ENCODE measurements at regions of chr12 and their contacts with region 1.

Region 1: DNA sequence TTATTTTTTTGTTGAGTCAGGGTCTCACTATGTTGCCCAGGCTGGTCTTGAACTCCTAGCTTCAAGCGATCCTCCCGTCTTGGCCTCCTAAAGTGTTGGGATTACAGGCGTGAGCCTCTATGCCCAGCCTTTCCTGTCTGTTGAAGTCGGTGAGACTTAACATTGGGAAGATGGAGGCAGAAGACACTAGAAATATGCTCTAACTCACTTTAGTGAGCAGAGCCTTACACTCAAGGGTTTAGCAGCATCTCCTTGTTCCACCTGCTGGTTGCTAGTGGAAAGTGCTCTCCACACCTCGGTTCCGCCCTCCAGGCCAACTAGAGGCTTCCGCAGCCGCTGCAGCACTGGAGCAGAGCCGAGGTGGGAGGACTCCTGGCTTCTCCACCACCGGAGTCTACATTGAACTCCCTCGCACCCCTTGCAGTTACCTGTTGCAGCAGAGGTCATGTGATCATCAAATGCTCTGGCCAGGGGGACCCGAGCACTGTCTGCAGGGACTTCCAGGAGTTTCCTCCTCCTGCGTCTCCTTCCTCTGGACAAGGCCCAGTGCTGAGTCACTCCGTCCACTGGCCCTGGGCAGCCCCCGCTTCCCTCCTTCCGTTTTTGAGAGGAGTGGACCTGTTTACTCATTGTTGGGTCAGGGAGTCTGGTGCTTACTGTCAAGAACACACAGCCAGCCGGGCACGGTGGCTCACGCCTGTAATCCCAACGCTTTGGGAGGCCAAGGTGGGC is 9.4 kb upstream of the HVCN1 start:
- DNase-seq: peak; percentile 51 to 87 (median 77)
- ATAC-seq: peak; percentile 96
- H3K4me3 ChIP-seq: no peak overlapping the region
- H3K4me3 Mint-ChIP-seq: peak overlapping the region in 4 of 10 donors; percentile 14 to 69 (median 34)
- H3K27ac ChIP-seq: no peak overlapping the region
- H3K27ac Mint-ChIP-seq: peak overlapping the region in 6 of 9 donors; percentile 49 to 88 (median 74)
- H3K4me1 ChIP-seq: peaks cover 7 to 10% of the 10 kb centered on the region in 2 donors
- H3K4me1 Mint-ChIP-seq: peaks cover 5 to 25% (median 18%) of the 10 kb centered on the region in 7 donors
- H3K27me3 ChIP-seq: no peaks in the 10 kb centered on the region
- H3K27me3 Mint-ChIP-seq: no peaks in the 10 kb centered on the region

Region 2: GRCh38 chr12:110280392-110280778 is 418.0 kb before region 1 on chr12:
- CTCF ChIA-PET with region 1: no interaction called
- POLR2A ChIA-PET with region 1: no interaction called
- intact Hi-C with region 1: no loop called
- DNase-seq: peak in 3 of 9 donors; percentile 41 to 62 (median 52)
- ATAC-seq: peak; percentile 20
- H3K4me3 ChIP-seq: peak overlapping the region; percentile 83
- H3K4me3 Mint-ChIP-seq: peak overlapping the region; percentile 82 to 96 (median 90)
- H3K27ac ChIP-seq: peak overlapping the region; percentile 87
- H3K27ac Mint-ChIP-seq: peak overlapping the region; percentile 4 to 93 (median 88)
- H3K4me1 ChIP-seq: peaks cover 12 to 27% of the 10 kb centered on the region in 2 donors
- H3K4me1 Mint-ChIP-seq: peaks cover 37 to 46% (median 44%) of the 10 kb centered on the region in 7 donors
- H3K27me3 ChIP-seq: no peaks in the 10 kb centered on the region
- H3K27me3 Mint-ChIP-seq: peaks cover 0 to 11% (median 0%) of the 10 kb centered on the region in 5 donors

Region 3: GRCh38 chr12:110555577-110556406 is 142.5 kb before region 1 on chr12:
- CTCF ChIA-PET with region 1: interaction called, 3 read pairs
- POLR2A ChIA-PET with region 1: no interaction called
- intact Hi-C with region 1: loop called (anchors 1 kb)
- DNase-seq: no peak
- ATAC-seq: no peak
- H3K4me3 ChIP-seq: no peak overlapping the region
- H3K4me3 Mint-ChIP-seq: peak overlapping the region in 3 of 10 donors; percentile 5 to 49 (median 18)
- H3K27ac ChIP-seq: no peak overlapping the region
- H3K27ac Mint-ChIP-seq: peak overlapping the region in 6 of 9 donors; percentile 1 to 77 (median 43)
- H3K4me1 ChIP-seq: peaks cover 0 to 18% of the 10 kb centered on the region in 2 donors
- H3K4me1 Mint-ChIP-seq: peaks cover 32 to 75% (median 63%) of the 10 kb centered on the region in 7 donors
- H3K27me3 ChIP-seq: no peaks in the 10 kb centered on the region
- H3K27me3 Mint-ChIP-seq: no peaks in the 10 kb centered on the region

Region 4: GRCh38 chr12:110613771-110614684 is 84.3 kb before region 1 on chr12 and contains the start of gene TCTN1:
- CTCF ChIA-PET with region 1: interaction called, 4 read pairs
- POLR2A ChIA-PET with region 1: no interaction called
- intact Hi-C with region 1: loop called (anchors 1 kb)
- DNase-seq: peak; percentile 88 to 98 (median 93)
- ATAC-seq: peak; percentile 100
- H3K4me3 ChIP-seq: peak within 1 kb of the TSS; percentile 75
- H3K4me3 Mint-ChIP-seq: peak within 1 kb of the TSS; percentile 81 to 89 (median 88)
- H3K27ac ChIP-seq: peak within 1 kb of the TSS; percentile 87
- H3K27ac Mint-ChIP-seq: peak within 1 kb of the TSS; percentile 31 to 92 (median 87)
- H3K4me1 ChIP-seq: peaks cover 4 to 6% of the 10 kb centered on the region in 2 donors
- H3K4me1 Mint-ChIP-seq: peaks cover 0 to 10% (median 4%) of the 10 kb centered on the region in 7 donors
- H3K27me3 ChIP-seq: no peaks in the 10 kb centered on the region
- H3K27me3 Mint-ChIP-seq: no peaks in the 10 kb centered on the region
- total RNA-seq, gene TCTN1: 5.2 to 13.0 (median 10.2) TPM

Region 5: GRCh38 chr12:110657747-110658146 is 40.6 kb before region 1 on chr12:
- CTCF ChIA-PET with region 1: interaction called, 6 read pairs
- POLR2A ChIA-PET with region 1: no interaction called
- intact Hi-C with region 1: loop called in 1 of 2 experiments (anchors 5 kb)
- DNase-seq: no peak
- ATAC-seq: no peak
- H3K4me3 ChIP-seq: no peak overlapping the region
- H3K4me3 Mint-ChIP-seq: no peak overlapping the region
- H3K27ac ChIP-seq: no peak overlapping the region
- H3K27ac Mint-ChIP-seq: peak overlapping the region in 2 of 9 donors; percentile 2 to 53
- H3K4me1 ChIP-seq: peaks cover 11 to 14% of the 10 kb centered on the region in 2 donors
- H3K4me1 Mint-ChIP-seq: peaks cover 12 to 22% (median 15%) of the 10 kb centered on the region in 7 donors
- H3K27me3 ChIP-seq: no peaks in the 10 kb centered on the region
- H3K27me3 Mint-ChIP-seq: no peaks in the 10 kb centered on the region

Region 6: DNA sequence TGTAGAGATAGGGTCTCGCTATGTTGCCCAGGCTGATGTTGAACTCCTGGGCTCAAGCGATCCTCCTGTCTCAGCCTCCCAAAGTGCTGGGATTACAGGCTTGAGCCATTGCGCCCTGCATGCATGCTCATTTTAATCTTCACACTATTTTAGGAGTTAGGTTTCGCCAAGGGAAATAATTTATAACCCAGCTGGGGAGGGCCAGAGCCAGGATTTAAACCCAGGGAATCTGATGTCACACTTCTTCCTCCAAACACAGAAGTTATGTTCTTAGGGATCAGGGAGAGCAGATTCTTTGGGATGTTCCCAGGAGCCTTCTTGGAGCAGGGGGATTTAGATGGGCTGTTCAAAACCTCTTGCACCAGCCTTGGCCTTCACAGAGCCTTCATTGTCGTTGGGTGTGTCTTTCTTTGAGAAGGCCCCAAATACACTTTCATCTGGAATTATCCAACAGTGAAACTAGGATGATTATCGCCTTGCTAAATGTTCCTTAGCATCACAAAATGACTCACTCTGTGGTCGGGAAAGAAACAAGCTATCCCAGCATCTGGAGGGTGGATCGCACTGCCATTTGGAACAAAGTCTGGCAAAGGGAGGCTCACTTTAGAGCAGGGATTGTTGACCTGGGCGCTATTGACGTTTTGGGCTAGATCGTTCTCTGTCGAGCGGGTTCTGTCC is 52.6 kb after region 1 on chr12:
- CTCF ChIA-PET with region 1: no interaction called
- POLR2A ChIA-PET with region 1: no interaction called
- intact Hi-C with region 1: no loop called
- DNase-seq: no peak
- ATAC-seq: no peak
- H3K4me3 ChIP-seq: no peak overlapping the region
- H3K4me3 Mint-ChIP-seq: no peak overlapping the region
- H3K27ac ChIP-seq: no peak overlapping the region
- H3K27ac Mint-ChIP-seq: no peak overlapping the region
- H3K4me1 ChIP-seq: no peaks in the 10 kb centered on the region
- H3K4me1 Mint-ChIP-seq: no peaks in the 10 kb centered on the region
- H3K27me3 ChIP-seq: no peaks in the 10 kb centered on the region
- H3K27me3 Mint-ChIP-seq: no peaks in the 10 kb centered on the region

Region 7: GRCh38 chr12:110826592-110827200 is 128.4 kb after region 1 on chr12:
- CTCF ChIA-PET with region 1: interaction called, 3 read pairs
- POLR2A ChIA-PET with region 1: no interaction called
- intact Hi-C with region 1: loop called (anchors 1 kb)
- DNase-seq: peak; percentile 61 to 85 (median 77)
- ATAC-seq: peak; percentile 98
- H3K4me3 ChIP-seq: no peak overlapping the region
- H3K4me3 Mint-ChIP-seq: peak overlapping the region in 9 of 10 donors; percentile 35 to 75 (median 58)
- H3K27ac ChIP-seq: no peak overlapping the region
- H3K27ac Mint-ChIP-seq: peak overlapping the region in 8 of 9 donors; percentile 4 to 81 (median 20)
- H3K4me1 ChIP-seq: no peaks in the 10 kb centered on the region
- H3K4me1 Mint-ChIP-seq: peaks cover 0 to 10% (median 6%) of the 10 kb centered on the region in 7 donors
- H3K27me3 ChIP-seq: no peaks in the 10 kb centered on the region
- H3K27me3 Mint-ChIP-seq: peaks cover 0 to 4% (median 0%) of the 10 kb centered on the region in 5 donors

Region 8: GRCh38 chr12:111102062-111102739 is 403.9 kb after region 1 on chr12:
- CTCF ChIA-PET with region 1: no interaction called
- POLR2A ChIA-PET with region 1: no interaction called
- intact Hi-C with region 1: no loop called
- DNase-seq: no peak
- ATAC-seq: no peak
- H3K4me3 ChIP-seq: no peak overlapping the region
- H3K4me3 Mint-ChIP-seq: no peak overlapping the region
- H3K27ac ChIP-seq: no peak overlapping the region
- H3K27ac Mint-ChIP-seq: peak overlapping the region in 2 of 9 donors; percentile 5 to 30
- H3K4me1 ChIP-seq: no peaks in the 10 kb centered on the region
- H3K4me1 Mint-ChIP-seq: peaks cover 8 to 14% (median 9%) of the 10 kb centered on the region in 7 donors
- H3K27me3 ChIP-seq: no peaks in the 10 kb centered on the region
- H3K27me3 Mint-ChIP-seq: peaks cover 0 to 12% (median 0%) of the 10 kb centered on the region in 5 donors

Measured in naive thymus-derived CD4-positive, alpha-beta T cell (primary cell).